HEK293 (cell line): ENCODE measurements at regions of chr22 and their contacts with region 1.

Region 1: DNA sequence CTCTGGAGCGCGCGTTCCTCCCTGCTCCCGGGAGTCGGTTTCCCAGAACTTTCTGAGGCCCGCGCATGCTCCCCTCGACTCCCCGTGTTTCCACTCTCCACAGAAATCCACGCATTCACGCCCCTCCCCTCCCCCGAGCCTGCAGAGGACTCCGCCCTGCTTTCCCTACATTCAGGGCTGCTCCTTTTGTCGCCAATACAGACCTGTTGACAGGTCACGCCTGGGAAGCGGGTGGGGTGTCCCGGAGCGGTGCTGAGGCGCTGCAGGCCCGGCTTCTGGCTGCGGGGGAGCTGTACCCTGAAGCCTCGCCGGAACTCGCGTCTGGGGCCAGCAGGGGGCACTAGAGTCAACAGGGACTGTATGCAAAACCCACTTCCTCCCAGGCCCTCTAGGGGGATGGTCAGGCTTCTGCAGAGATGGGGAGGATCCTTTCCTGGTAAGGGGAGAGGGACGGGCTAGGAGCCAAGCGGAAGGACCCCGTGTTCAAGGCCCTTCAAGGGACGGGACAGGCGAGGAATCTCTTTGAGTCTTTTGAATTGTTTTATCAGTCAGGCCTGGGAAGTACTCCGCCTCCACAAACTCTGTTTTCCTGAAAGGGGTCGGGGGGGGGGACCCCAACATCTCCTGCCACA is at the start of gene PRAME:
- H3K4me3 ChIP-seq: no peak within 1 kb of the TSS
- H3K27ac ChIP-seq: no peak within 1 kb of the TSS
- H3K4me1 ChIP-seq: no peaks in the 10 kb centered on the region
- CTCF ChIP-seq: peak; percentile 92

Region 2: GRCh38 chr22:22547692-22548300 is 11.3 kb before region 1 on chr22:
- CTCF ChIA-PET with region 1: interaction called, 14 read pairs
- POLR2A ChIA-PET with region 1: no interaction called
- H3K4me3 ChIP-seq: no peak overlapping the region
- H3K27ac ChIP-seq: no peak overlapping the region
- H3K4me1 ChIP-seq: no peaks in the 10 kb centered on the region
- CTCF ChIP-seq: no peak

Region 3: DNA sequence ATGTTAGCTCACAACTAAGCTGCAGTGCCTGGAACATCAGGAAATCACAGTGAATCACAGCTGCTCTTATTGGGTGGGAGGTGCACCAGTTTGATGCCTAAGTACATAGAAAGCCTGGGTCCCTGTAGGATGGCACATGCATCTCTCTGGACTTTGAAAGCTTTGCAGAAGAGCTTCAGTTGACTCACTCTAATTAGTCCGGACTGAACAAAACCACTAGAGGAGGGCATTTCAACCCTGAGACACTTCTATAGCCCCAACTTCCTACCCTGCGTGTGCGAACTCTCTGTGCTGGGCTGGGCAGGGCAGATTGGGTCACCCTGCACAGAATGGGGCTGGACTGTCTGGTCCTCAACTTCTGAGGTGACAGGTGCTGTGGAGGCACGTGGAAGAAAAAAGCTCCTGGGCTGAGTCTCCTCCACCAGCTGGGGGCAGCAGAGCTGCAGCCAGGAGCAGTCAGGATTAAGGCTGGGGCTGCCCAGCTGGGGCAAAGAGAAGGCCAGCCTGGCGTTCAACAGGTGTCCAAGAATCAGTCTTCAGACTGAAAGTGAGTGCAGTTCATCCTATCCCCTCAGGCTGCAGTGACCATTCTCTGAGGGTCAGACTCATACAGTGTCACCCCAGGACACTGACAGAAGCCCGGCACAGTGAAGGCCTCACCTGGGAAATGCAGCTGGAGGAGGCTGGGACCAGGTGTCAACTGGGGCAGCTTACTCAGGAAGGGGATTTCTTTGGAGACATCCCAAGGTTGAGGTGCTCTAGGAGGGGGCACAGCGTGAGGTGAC is 107.4 kb after region 1 on chr22:
- CTCF ChIA-PET with region 1: no interaction called
- POLR2A ChIA-PET with region 1: no interaction called
- H3K4me3 ChIP-seq: no peak overlapping the region
- H3K27ac ChIP-seq: no peak overlapping the region
- H3K4me1 ChIP-seq: no peaks in the 10 kb centered on the region
- CTCF ChIP-seq: peak; percentile 65